ENCODE measurements at regions of chr2 and their contacts with region 1.

Region 1: GRCh38 chr2:237864940-237865622 is 5.7 kb downstream of the RAMP1 start:
- DNase-seq: peak in 4 of 5 donors; percentile 61 to 81 (median 66)
- ATAC-seq: peak; percentile 4 to 53 (median 52)
- H3K4me3 ChIP-seq: no peak overlapping the region
- H3K27ac ChIP-seq: peak overlapping the region in 10 of 12 donors; percentile 62 to 97 (median 92)
- H3K4me1 ChIP-seq: peaks cover 0 to 49% (median 19%) of the 10 kb centered on the region in 12 donors
- H3K27me3 ChIP-seq: peaks cover 0 to 18% (median 0%) of the 10 kb centered on the region in 9 donors
- CTCF ChIP-seq: no peak
- POLR2A ChIP-seq: no peak

Region 2: DNA sequence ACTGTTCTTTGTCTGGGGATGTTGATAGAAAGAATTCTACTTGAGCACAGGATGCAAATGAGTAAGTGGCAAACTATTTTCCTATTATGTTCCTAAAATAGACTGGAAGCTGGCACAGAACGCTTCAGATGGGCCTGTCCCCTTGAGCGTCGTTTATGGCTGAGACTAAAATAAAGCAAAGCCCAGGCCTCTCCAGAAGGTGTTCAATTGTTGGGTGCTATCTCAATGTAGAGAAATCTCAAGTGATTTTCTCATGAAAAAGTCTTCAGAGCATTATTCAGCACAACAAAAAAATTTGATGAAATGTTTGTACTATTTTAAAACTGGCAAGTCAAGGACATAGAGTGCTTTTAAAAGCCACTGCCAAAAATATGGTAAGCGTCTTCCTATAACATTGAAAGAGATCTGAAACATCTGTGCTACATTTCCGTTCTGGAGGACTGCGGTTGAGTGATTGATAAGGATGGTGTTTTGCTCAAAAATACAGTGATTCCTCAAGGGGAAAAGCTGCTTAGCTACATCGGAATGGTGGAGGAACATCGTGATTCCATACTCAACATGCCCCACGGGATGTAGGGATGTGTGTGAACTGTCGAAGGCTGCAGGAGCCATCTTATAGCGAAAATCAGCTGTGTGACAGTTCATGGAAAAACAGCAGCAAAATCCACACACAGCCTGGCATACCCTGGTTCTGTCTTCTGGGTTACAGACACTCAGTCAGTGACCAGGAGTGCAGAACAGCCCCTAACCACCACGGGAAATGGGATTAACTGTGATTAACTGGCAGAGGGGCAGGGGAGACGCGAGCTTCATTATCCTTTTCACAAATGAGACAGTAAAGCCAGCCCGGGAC is 248.1 kb before region 1 on chr2:
- intact Hi-C with region 1: no loop called
- DNase-seq: no peak
- ATAC-seq: peak; percentile 82 to 92 (median 88)
- H3K4me3 ChIP-seq: no peak overlapping the region
- H3K27ac ChIP-seq: peak overlapping the region; percentile 39 to 92 (median 85)
- H3K4me1 ChIP-seq: peaks cover 5 to 52% (median 40%) of the 10 kb centered on the region in 12 donors
- H3K27me3 ChIP-seq: no peaks in the 10 kb centered on the region
- CTCF ChIP-seq: no peak
- POLR2A ChIP-seq: no peak

Region 3: GRCh38 chr2:237886685-237887481 is 21.8 kb after region 1 on chr2:
- intact Hi-C with region 1: loop called in 1 of 10 experiments (anchors 2 kb)
- DNase-seq: peak; percentile 87 to 97 (median 89)
- ATAC-seq: peak; percentile 86 to 90 (median 88)
- H3K4me3 ChIP-seq: no peak overlapping the region
- H3K27ac ChIP-seq: peak overlapping the region; percentile 65 to 100 (median 92)
- H3K4me1 ChIP-seq: peaks cover 0 to 46% (median 18%) of the 10 kb centered on the region in 12 donors
- H3K27me3 ChIP-seq: no peaks in the 10 kb centered on the region
- CTCF ChIP-seq: no peak
- POLR2A ChIP-seq: no peak

Region 4: GRCh38 chr2:238282861-238283738 is 418.0 kb after region 1 on chr2:
- intact Hi-C with region 1: loop called in 1 of 10 experiments (anchors 5 kb)
- DNase-seq: no peak
- ATAC-seq: no peak
- H3K4me3 ChIP-seq: no peak overlapping the region
- H3K27ac ChIP-seq: no peak overlapping the region
- H3K4me1 ChIP-seq: peaks cover 4 to 67% (median 40%) of the 10 kb centered on the region in 12 donors
- H3K27me3 ChIP-seq: no peaks in the 10 kb centered on the region
- CTCF ChIP-seq: no peak
- POLR2A ChIP-seq: no peak